H1 (cell line): ENCODE measurements at regions of chr15 and their contacts with region 1.

Region 1: DNA sequence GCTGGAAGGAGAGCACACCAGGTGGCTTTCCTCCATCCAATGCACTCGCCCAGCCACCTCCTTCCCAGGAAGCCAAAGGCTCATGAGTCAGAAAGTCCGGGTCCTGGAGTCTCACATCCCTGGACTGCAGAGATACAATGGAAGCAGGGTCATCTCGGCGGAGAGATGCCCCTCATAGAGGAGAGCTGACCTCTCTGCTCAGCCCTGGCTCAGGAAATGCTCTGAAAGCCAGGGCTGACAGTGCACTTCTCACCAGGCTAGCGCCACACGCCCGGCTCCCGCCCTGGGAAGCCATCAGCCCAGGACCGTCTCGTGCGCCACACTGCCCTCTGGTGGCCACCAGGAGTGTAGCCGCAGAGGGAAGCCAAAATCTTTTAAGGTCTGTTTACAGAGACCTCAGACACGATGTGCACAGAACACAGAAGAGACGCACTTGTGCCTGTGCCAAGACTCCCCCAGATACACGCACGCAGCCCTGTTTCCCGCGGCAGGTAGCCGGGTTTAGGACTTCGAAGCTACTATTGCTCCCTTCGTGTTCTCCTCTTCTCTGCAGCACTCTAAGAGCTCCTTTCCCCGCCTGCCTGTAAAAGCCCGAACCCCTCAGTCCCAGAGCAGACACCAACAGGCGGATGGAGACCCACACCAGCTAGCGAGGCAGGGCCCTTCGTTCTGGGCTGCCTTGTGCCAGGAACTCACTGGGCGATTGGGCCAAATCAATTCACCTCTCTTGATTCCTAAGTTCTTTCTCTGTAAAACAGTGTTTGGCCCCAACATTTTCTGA is 9.7 kb downstream of the NTRK3 start:
- DNase-seq: peak; percentile 70 to 92
- H3K4me3 ChIP-seq: peak overlapping the region in 3 of 4 experiments; percentile 19 to 45 (median 34); a peak in 4 of 8 replicates
- H3K27ac ChIP-seq: no peak overlapping the region
- H3K4me1 ChIP-seq: peaks cover 0 to 7% (median 2%) of the 10 kb centered on the region in 4 experiments; a peak in 3 of 7 replicates
- H3K27me3 ChIP-seq: peaks cover 0 to 4% (median 2%) of the 10 kb centered on the region in 4 experiments; a peak in 3 of 7 replicates
- CTCF ChIP-seq: peak; percentile 92 to 96 (median 95)
- EP300 ChIP-seq: no peak
- POLR2A ChIP-seq: no peak
- RAD21 ChIP-seq: peak; percentile 80 to 85

Region 2: GRCh38 chr15:88166082-88166993 is 80.5 kb before region 1 on chr15:
- CTCF ChIA-PET with region 1: interaction called, 11 read pairs
- POLR2A ChIA-PET with region 1: no interaction called
- DNase-seq: peak; percentile 3 to 78
- H3K4me3 ChIP-seq: no peak overlapping the region
- H3K27ac ChIP-seq: no peak overlapping the region
- H3K4me1 ChIP-seq: no peaks in the 10 kb centered on the region
- H3K27me3 ChIP-seq: no peaks in the 10 kb centered on the region; a peak in 1 of 7 replicates
- CTCF ChIP-seq: no peak
- EP300 ChIP-seq: no peak
- POLR2A ChIP-seq: no peak
- RAD21 ChIP-seq: peak in 1 of 2 experiments; percentile 9; a peak in 1 of 4 replicates

Region 3: DNA sequence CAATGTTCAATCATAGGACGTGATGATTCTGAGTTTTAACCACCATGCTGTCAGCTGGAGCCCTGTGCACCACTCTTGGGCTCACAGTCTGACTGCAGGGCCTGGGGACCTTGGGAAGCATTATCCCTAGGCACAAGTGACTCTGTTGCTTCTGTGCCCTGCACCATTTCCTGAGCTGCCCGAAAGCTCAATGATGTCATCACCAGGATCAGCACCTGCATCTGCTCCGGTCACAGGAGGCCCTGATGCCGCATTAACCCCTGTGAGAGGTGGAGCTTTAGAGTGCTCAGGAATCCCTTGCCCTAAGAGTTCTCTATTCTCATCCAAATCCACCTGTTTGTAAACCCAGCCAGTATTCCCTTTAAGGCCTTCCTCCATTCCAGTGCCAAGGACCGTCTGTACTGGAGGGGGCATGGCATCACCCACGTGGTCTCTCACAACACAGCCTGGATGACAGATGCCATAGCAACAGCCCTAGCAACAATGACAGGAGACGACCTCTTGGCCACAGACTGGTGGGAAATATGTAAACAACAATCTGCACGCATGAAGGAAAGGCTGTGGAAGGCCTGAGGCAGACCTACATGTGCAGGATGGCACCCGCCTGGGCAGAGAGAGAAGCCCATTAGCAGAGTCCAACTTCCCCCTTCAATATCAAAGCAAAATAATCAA is 28.2 kb before region 1 on chr15:
- CTCF ChIA-PET with region 1: interaction called, 53 read pairs
- POLR2A ChIA-PET with region 1: no interaction called
- DNase-seq: no peak
- H3K4me3 ChIP-seq: no peak overlapping the region
- H3K27ac ChIP-seq: no peak overlapping the region
- H3K4me1 ChIP-seq: peaks cover 0 to 5% (median under 1%) of the 10 kb centered on the region in 4 experiments; a peak in 2 of 7 replicates
- H3K27me3 ChIP-seq: no peaks in the 10 kb centered on the region
- CTCF ChIP-seq: no peak
- EP300 ChIP-seq: no peak
- POLR2A ChIP-seq: no peak
- RAD21 ChIP-seq: no peak

Region 4: GRCh38 chr15:88267720-88268333 is 21.0 kb after region 1 on chr15:
- CTCF ChIA-PET with region 1: interaction called, 144 read pairs
- POLR2A ChIA-PET with region 1: no interaction called
- DNase-seq: no peak
- H3K4me3 ChIP-seq: no peak overlapping the region
- H3K27ac ChIP-seq: no peak overlapping the region
- H3K4me1 ChIP-seq: no peaks in the 10 kb centered on the region; a peak in 1 of 7 replicates
- H3K27me3 ChIP-seq: peaks cover 0 to 6% (median 2%) of the 10 kb centered on the region in 4 experiments; a peak in 2 of 7 replicates
- CTCF ChIP-seq: no peak
- EP300 ChIP-seq: no peak
- POLR2A ChIP-seq: no peak
- RAD21 ChIP-seq: no peak

Region 5: DNA sequence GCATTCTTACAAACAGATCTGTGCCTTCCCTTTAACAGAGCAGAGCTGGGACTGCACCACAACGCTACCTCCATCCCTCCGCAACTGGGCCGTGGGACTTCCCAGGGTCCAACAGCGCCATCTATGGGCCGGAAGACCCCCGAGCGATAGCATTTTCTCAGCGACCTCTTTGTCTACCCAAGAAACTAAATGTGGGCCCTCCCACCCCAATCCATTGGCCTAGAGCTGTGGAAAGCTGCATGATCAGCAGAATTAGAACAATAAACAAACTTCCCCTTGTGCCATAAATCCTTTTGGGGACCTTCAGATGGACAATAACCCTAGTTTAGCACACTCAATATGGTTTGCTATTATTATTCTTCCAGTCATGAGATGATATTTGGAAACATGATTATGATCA is 84.4 kb after region 1 on chr15:
- CTCF ChIA-PET with region 1: interaction called, 32 read pairs
- POLR2A ChIA-PET with region 1: no interaction called
- DNase-seq: peak; percentile 77 to 96
- H3K4me3 ChIP-seq: no peak overlapping the region
- H3K27ac ChIP-seq: no peak overlapping the region
- H3K4me1 ChIP-seq: no peaks in the 10 kb centered on the region
- H3K27me3 ChIP-seq: no peaks in the 10 kb centered on the region
- CTCF ChIP-seq: peak; percentile 83 to 91 (median 91)
- EP300 ChIP-seq: 0 out of 3 replicates have a peak, but pooled peaks of 1 of the 2 experiments have one; percentile 43
- POLR2A ChIP-seq: no peak
- RAD21 ChIP-seq: peak; percentile 91 to 92

Region 6: DNA sequence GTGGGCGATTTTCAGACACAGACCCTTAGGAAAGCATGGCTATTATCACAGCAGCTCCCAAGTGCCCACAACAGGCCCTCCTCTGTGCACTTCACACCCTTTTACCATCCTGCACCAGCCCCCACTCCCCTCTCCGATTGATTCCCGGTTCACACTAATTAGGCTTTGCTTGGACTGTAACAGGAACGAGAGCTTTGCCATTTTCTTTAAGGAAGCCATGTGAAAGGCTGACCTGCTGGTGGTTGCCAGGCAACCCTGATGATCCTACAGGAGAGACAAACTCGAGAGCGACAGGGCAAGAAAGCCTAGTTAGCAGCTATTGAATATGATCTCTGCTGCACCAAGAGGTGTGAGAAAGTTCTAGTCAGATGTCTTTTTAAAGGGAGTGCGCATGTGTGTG is 327.8 kb after region 1 on chr15:
- CTCF ChIA-PET with region 1: no interaction called
- POLR2A ChIA-PET with region 1: no interaction called
- DNase-seq: no peak
- H3K4me3 ChIP-seq: no peak overlapping the region
- H3K27ac ChIP-seq: no peak overlapping the region
- H3K4me1 ChIP-seq: peaks cover 0 to 5% (median 0%) of the 10 kb centered on the region in 4 experiments; a peak in 1 of 7 replicates
- H3K27me3 ChIP-seq: no peaks in the 10 kb centered on the region
- CTCF ChIP-seq: no peak
- EP300 ChIP-seq: no peak
- POLR2A ChIP-seq: no peak
- RAD21 ChIP-seq: no peak

Region 7: GRCh38 chr15:88681610-88682221 is 434.9 kb after region 1 on chr15:
- CTCF ChIA-PET with region 1: no interaction called
- POLR2A ChIA-PET with region 1: no interaction called
- DNase-seq: peak in 1 of 2 experiments; percentile 40
- H3K4me3 ChIP-seq: no peak overlapping the region
- H3K27ac ChIP-seq: no peak overlapping the region
- H3K4me1 ChIP-seq: no peaks in the 10 kb centered on the region
- H3K27me3 ChIP-seq: no peaks in the 10 kb centered on the region
- CTCF ChIP-seq: no peak
- EP300 ChIP-seq: no peak
- POLR2A ChIP-seq: no peak
- RAD21 ChIP-seq: no peak